Psoas muscle (tissue), 8 donors: ENCODE measurements at regions of chr12 and their contacts with region 1.

Region 1: GRCh38 chr12:54220092-54220557 is 31.3 kb upstream of the SMUG1 start:
- DNase-seq: peak; percentile 63 to 76
- ATAC-seq: peak; percentile 72 to 80 (median 74)
- H3K4me3 ChIP-seq: no peak overlapping the region
- H3K27ac ChIP-seq: no peak overlapping the region
- H3K4me1 ChIP-seq: peaks cover 11% of the 10 kb centered on the region
- H3K27me3 ChIP-seq: peaks cover 0 to 5% (median 0%) of the 10 kb centered on the region in 3 donors
- CTCF ChIP-seq: peak; percentile 73

Region 2: DNA sequence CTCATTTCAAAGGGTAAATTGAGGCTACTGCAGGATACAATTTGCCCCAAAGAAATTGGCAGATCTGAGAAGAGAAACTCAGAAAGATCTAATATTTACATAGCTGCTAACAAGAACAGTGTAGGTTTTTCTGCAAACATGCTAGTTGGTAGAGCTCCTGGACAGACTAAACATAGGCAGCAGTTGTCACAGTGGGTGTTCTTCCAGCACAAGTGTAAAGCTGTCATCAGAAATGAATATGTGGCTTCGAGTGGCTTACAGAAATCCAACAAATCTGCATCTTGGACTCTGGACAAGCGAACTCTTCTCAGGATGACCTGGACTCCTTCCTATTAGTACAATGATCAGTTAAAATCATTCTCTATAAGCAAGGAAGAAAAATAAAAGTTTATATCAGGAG is 53.9 kb after region 1 on chr12:
- intact Hi-C with region 1: loop called in 1 of 2 experiments (anchors 5 kb)
- DNase-seq: no peak
- ATAC-seq: peak; percentile 77 to 88 (median 79)
- H3K4me3 ChIP-seq: no peak overlapping the region
- H3K27ac ChIP-seq: peak overlapping the region; percentile 39
- H3K4me1 ChIP-seq: peaks cover 35% of the 10 kb centered on the region
- H3K27me3 ChIP-seq: no peaks in the 10 kb centered on the region
- CTCF ChIP-seq: no peak

Region 3: GRCh38 chr12:54324617-54325441 is 104.7 kb after region 1 on chr12 and contains the start of gene COPZ1:
- intact Hi-C with region 1: loop called in 1 of 2 experiments (anchors 5 kb)
- DNase-seq: peak; percentile 93 to 95
- ATAC-seq: peak; percentile 97 to 99 (median 98)
- H3K4me3 ChIP-seq: peak within 1 kb of the TSS; percentile 87
- H3K27ac ChIP-seq: peak within 1 kb of the TSS; percentile 91
- H3K4me1 ChIP-seq: peaks cover 33% of the 10 kb centered on the region
- H3K27me3 ChIP-seq: no peaks in the 10 kb centered on the region
- CTCF ChIP-seq: peak; percentile 69
- total RNA-seq, gene COPZ1: 84.4 to 102 (median 93.0) TPM

Region 4: DNA sequence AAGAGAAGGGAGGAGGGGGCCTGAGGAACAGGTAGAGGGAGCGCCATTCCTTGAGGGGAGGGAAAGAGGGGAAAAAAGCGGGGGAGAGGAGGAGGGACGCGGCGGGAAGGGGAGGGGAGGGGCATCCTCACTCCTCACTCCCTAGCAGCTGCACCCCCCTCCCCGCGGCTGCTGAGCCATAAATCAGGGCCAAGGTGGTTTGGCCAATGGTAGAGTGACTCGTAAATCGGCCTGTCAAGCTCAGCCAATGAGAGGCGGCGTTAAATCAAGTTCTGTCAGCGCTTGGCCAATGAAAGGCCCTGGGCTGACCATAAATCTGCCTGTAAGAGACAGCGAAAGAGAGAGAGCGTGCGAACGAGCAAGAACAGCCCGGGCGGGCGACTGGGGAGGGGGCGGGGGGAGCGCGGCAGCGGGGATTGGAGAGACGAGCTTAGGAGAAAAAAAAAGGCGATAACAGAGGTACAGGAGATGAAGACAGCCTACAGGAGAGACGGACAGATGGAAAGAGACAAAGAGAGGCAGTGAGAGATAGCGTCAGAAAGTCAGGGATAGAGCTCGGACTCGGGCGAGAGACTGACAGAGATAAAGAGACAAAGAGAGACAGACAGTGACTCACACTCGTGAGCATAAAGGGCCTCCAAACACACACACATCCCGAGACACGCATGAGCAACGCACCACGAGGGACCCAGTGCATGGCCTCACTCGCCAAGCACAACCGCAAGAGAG is 139.1 kb after region 1 on chr12:
- intact Hi-C with region 1: loop called (anchors 2 to 5 kb)
- DNase-seq: peak; percentile 96 to 98
- ATAC-seq: peak; percentile 95
- H3K4me3 ChIP-seq: peak overlapping the region; percentile 65
- H3K27ac ChIP-seq: peak overlapping the region; percentile 89
- H3K4me1 ChIP-seq: peaks cover 14% of the 10 kb centered on the region
- H3K27me3 ChIP-seq: no peaks in the 10 kb centered on the region
- CTCF ChIP-seq: no peak

Region 5: DNA sequence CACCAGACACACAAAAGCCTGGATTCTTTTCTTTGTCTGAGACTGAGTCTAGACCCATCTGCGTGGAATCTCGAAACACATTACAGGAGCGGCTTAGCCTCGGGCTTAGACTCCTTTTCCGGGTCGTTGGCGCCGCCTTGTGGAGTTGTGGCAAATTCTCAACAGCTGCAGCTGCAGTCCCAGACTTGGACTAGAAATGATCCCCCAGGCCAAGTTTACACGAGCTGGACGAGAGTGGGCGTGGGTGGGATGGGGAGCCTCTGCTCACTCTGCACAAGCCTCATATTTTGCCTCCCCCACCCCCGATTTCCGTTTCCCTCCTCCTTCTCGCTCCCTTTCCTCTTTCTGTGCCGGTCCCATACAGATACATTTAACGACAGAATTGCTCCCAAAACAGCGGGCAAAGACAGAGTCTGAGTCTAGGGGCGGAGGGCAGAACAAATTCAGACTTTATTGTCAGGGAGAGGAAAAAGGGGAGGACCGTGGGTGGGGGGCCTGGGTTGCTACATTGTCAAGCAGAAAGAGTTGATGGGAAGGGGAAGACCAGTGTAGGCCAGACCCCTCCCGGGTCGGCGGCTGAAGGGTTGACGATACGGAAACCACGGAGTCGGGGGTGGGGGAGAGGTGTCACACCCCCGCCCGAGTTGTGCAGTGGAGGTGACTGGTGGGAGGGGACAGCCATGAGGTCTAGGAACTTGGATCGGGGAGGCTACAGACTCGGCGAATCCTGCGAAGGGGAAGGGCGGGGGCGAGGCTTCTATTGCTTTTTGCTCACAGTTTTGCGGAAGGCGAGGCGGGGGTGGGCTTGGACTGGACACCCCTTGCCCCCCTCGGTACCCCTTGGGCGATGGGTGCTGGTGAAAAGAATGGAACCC is 148.8 kb after region 1 on chr12:
- intact Hi-C with region 1: loop called (anchors 2 to 5 kb)
- DNase-seq: peak; percentile 92 to 96
- ATAC-seq: peak; percentile 68 to 78 (median 74)
- H3K4me3 ChIP-seq: peak overlapping the region; percentile 52
- H3K27ac ChIP-seq: no peak overlapping the region
- H3K4me1 ChIP-seq: peaks cover 20% of the 10 kb centered on the region
- H3K27me3 ChIP-seq: no peaks in the 10 kb centered on the region
- CTCF ChIP-seq: peak; percentile 79